Left ventricle myocardium inferior (tissue), 1 donor: ENCODE measurements at regions of chr15 and their contacts with region 1.

Region 1: DNA sequence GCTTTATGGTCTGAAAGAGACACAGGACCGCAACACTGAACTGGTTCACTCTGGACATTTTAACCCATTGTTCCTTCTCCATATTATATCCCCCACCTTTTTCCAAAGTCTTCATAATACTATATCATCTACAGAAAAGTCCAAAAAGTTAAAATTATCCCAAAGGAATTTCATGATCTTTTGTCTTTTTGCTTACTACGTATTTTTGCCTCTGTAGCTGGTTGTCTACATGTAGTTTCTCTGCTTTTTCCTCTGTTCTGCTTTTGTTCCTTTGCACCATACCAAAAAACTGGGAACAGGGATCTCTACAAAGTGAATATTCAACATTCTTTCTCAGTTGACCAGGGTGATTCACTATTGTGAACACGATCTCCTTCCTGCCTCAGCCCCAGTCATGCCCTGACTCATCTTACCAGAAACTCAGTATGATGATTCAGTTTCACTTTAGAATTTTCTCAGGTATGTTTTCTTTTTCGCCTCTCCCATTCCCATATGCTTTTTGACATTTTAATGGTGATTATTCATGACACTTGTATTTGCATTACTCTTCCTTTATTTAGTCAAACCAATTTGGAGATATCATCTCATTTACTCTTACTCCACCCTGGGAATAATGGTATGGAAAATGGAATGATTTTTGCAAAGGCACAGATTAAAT is 14.5 kb downstream of the EMC4 start:
- DNase-seq: no peak
- H3K4me3 ChIP-seq: no peak overlapping the region
- H3K27ac ChIP-seq: no peak overlapping the region
- H3K4me1 ChIP-seq: no peaks in the 10 kb centered on the region
- H3K27me3 ChIP-seq: no peaks in the 10 kb centered on the region
- CTCF ChIP-seq: no peak

Region 2: GRCh38 chr15:34304613-34305012 is 65.3 kb after region 1 on chr15:
- intact Hi-C with region 1: loop called (anchors 10 kb)
- DNase-seq: no peak
- H3K4me3 ChIP-seq: no peak overlapping the region
- H3K27ac ChIP-seq: no peak overlapping the region
- H3K4me1 ChIP-seq: peaks cover 8% of the 10 kb centered on the region
- H3K27me3 ChIP-seq: no peaks in the 10 kb centered on the region
- CTCF ChIP-seq: no peak

Region 3: GRCh38 chr15:34373951-34374350 is 134.7 kb after region 1 on chr15:
- intact Hi-C with region 1: loop called (anchors 5 kb)
- DNase-seq: no peak
- H3K4me3 ChIP-seq: no peak overlapping the region
- H3K27ac ChIP-seq: no peak overlapping the region
- H3K4me1 ChIP-seq: no peaks in the 10 kb centered on the region
- H3K27me3 ChIP-seq: no peaks in the 10 kb centered on the region
- CTCF ChIP-seq: no peak